Activated naive CD8-positive, alpha-beta T cell treated with anti-CD3 and anti-CD28 coated beads, Interleukin-2, amount 10 ng/mL, durations not matched to agents 7 days and 5 days (primary cell): ENCODE measurements at regions of chr6 and their contacts with region 1.

Region 1: GRCh38 chr6:149316798-149317655 is 485 bp upstream of the TAB2 start:
- DNase-seq: peak; percentile 92
- ATAC-seq: peak; percentile 74
- H3K4me3 Mint-ChIP-seq: peak overlapping the region; percentile 83
- H3K27ac Mint-ChIP-seq: peak overlapping the region; percentile 86
- H3K4me1 Mint-ChIP-seq: peaks cover 24% of the 10 kb centered on the region
- H3K27me3 Mint-ChIP-seq: no peaks in the 10 kb centered on the region

Region 2: GRCh38 chr6:148776321-148777308 is 540.4 kb before region 1 on chr6:
- POLR2A ChIA-PET with region 1: no interaction called
- DNase-seq: no peak
- ATAC-seq: no peak
- H3K4me3 Mint-ChIP-seq: no peak overlapping the region
- H3K27ac Mint-ChIP-seq: no peak overlapping the region
- H3K4me1 Mint-ChIP-seq: peaks cover 10% of the 10 kb centered on the region
- H3K27me3 Mint-ChIP-seq: no peaks in the 10 kb centered on the region

Region 3: DNA sequence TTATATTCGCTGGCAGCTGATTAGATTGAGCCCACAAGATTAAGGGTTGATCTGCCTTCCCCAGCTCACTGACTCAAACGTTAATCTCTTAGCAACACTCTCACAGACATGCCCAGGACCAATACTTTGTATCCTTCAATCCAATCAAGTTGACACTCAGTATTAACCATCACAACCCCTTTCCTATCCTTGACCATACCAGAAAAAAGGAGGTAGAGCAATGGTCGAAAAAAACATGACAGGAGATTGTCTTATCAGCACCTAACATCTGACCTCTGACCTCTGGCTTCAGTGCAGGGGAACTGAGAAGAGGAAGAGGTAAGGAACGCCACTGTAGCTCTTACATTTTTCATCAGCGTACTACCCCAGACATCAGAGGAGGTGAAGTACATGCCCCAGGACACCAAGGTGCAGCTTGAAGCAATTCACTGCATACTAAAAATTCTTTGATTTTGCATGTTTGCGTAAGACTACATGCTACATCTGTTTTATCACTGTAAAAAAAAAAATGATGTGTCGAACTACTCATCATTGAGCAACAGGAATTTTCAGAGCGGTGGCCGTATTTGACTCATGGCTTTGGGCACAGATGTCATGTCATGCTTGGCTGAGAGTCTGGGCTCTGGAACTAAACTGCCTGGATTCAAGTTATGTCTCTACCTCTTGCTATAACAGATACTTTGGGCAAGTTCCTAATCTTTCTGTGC is 187.5 kb before region 1 on chr6:
- POLR2A ChIA-PET with region 1: interaction called, 27 read pairs
- DNase-seq: no peak
- ATAC-seq: no peak
- H3K4me3 Mint-ChIP-seq: no peak overlapping the region
- H3K27ac Mint-ChIP-seq: peak overlapping the region; percentile 90
- H3K4me1 Mint-ChIP-seq: peaks cover 57% of the 10 kb centered on the region
- H3K27me3 Mint-ChIP-seq: no peaks in the 10 kb centered on the region

Region 4: GRCh38 chr6:149147938-149148718 is 168.9 kb before region 1 on chr6:
- POLR2A ChIA-PET with region 1: interaction called, 21 read pairs
- DNase-seq: no peak
- ATAC-seq: peak; percentile 69
- H3K4me3 Mint-ChIP-seq: peak overlapping the region; percentile 39
- H3K27ac Mint-ChIP-seq: peak overlapping the region; percentile 87
- H3K4me1 Mint-ChIP-seq: peaks cover 64% of the 10 kb centered on the region
- H3K27me3 Mint-ChIP-seq: no peaks in the 10 kb centered on the region

Region 5: GRCh38 chr6:149235130-149235561 is 81.9 kb before region 1 on chr6:
- POLR2A ChIA-PET with region 1: interaction called, 10 read pairs
- DNase-seq: no peak
- ATAC-seq: no peak
- H3K4me3 Mint-ChIP-seq: no peak overlapping the region
- H3K27ac Mint-ChIP-seq: peak overlapping the region; percentile 74
- H3K4me1 Mint-ChIP-seq: peaks cover 38% of the 10 kb centered on the region
- H3K27me3 Mint-ChIP-seq: no peaks in the 10 kb centered on the region

Region 6: GRCh38 chr6:149368065-149368464 is 51.0 kb after region 1 on chr6:
- POLR2A ChIA-PET with region 1: interaction called, 10 read pairs
- DNase-seq: no peak
- ATAC-seq: peak; percentile 79
- H3K4me3 Mint-ChIP-seq: no peak overlapping the region
- H3K27ac Mint-ChIP-seq: no peak overlapping the region
- H3K4me1 Mint-ChIP-seq: peaks cover 38% of the 10 kb centered on the region
- H3K27me3 Mint-ChIP-seq: no peaks in the 10 kb centered on the region